Naive thymus-derived CD8-positive, alpha-beta T cell (primary cell): ENCODE measurements at regions of chr12 and their contacts with region 1.

Region 1: GRCh38 chr12:75511116-75512048 is at the start of gene KRR1:
- DNase-seq: peak; percentile 63 to 95 (median 87)
- ATAC-seq: peak; percentile 96 to 98
- H3K4me3 Mint-ChIP-seq: peak within 1 kb of the TSS; percentile 98 to 100 (median 99)
- H3K27ac Mint-ChIP-seq: peak within 1 kb of the TSS; percentile 98 to 100 (median 99)
- H3K4me1 Mint-ChIP-seq: peaks cover 17 to 38% (median 30%) of the 10 kb centered on the region in 4 donors
- H3K27me3 Mint-ChIP-seq: no peaks in the 10 kb centered on the region
- polyA plus RNA-seq, gene KRR1: 64.8 to 71.0 (median 66.7) TPM

Region 2: DNA sequence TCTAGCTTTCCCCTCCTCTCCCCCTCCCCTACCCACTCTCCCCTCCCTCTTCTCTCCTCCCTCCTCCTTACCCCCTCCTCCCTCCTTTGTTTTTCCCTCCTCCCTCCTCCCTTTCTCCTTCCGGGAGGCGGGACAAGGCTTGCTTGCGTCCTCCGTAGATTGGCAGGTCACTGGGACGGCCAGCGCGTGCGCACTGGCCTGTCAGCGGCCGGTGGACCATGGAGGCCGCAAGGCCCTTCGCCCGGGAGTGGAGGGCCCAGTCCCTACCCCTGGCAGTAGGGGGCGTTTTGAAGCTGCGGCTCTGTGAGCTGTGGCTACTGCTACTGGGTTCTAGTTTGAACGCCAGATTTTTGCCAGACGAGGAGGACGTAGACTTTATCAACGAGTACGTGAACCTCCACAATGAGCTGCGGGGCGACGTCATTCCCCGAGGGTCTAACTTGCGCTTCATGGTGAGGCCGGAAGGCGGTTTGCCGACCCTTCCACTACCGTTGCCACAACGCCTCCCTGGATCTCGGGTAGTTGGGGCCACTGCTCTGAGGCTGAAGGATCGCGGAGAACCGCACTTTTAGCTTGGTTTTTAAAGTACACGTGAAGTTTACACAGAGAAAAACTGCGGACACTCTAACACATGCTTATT is 120.4 kb before region 1 on chr12 and contains the start of gene GLIPR1L2:
- POLR2A ChIA-PET with region 1: interaction called, 11 read pairs
- DNase-seq: peak; percentile 67 to 92 (median 83)
- ATAC-seq: peak; percentile 89 to 92
- H3K4me3 Mint-ChIP-seq: peak within 1 kb of the TSS; percentile 90 to 97 (median 94)
- H3K27ac Mint-ChIP-seq: peak within 1 kb of the TSS; percentile 97 to 100 (median 98)
- H3K4me1 Mint-ChIP-seq: peaks cover 14 to 57% (median 38%) of the 10 kb centered on the region in 4 donors
- H3K27me3 Mint-ChIP-seq: no peaks in the 10 kb centered on the region
- polyA plus RNA-seq, gene GLIPR1L2: 1.1 to 3.2 (median 1.4) TPM

Region 3: GRCh38 chr12:75480469-75480949 is 30.9 kb before region 1 on chr12 and contains the start of gene GLIPR1:
- POLR2A ChIA-PET with region 1: interaction called, 24 read pairs
- DNase-seq: peak; percentile 22 to 82 (median 72)
- ATAC-seq: peak; percentile 71 to 74
- H3K4me3 Mint-ChIP-seq: peak within 1 kb of the TSS; percentile 74 to 100 (median 98)
- H3K27ac Mint-ChIP-seq: peak within 1 kb of the TSS; percentile 94 to 99 (median 99)
- H3K4me1 Mint-ChIP-seq: peaks cover 42 to 87% (median 74%) of the 10 kb centered on the region in 4 donors
- H3K27me3 Mint-ChIP-seq: peaks cover 0 to 1% (median 0%) of the 10 kb centered on the region in 5 donors
- polyA plus RNA-seq, gene GLIPR1: 51.2 to 117 (median 58.6) TPM

Region 4: DNA sequence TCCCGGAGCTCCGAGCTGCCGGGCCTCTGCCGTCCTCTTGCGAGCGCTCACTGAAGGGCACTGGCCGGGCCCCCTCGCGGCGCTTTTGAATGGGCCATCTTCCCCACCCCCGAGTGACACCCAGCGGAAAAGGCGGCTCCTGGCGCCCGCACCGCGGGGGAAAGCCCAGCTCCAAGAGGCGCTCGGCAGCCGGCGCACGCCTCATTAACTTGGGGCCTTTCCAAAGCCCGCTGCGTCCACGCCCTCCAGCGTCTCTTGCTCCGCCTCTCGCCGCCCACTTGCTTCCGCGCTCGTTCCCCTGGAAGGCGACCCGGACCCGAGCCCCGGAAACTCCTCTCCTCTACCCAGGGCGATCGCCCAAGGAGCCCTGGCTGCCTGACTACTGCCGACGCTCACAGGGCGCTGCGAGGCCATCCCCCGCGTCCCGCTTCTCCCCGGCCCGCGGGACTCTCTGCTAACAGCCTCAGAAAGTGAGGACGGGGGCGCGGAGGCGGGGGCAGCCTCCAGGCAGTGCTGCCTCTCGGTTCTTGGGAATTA is 520.2 kb after region 1 on chr12 and contains the start of gene PHLDA1:
- POLR2A ChIA-PET with region 1: interaction called, 14 read pairs
- DNase-seq: peak; percentile 72 to 90 (median 78)
- ATAC-seq: peak; percentile 80 to 85
- H3K4me3 Mint-ChIP-seq: peak within 1 kb of the TSS; percentile 82 to 97 (median 91)
- H3K27ac Mint-ChIP-seq: peak within 1 kb of the TSS; percentile 82 to 95 (median 90)
- H3K4me1 Mint-ChIP-seq: peaks cover 20 to 30% (median 25%) of the 10 kb centered on the region in 4 donors
- H3K27me3 Mint-ChIP-seq: peaks cover 0 to 8% (median 0%) of the 10 kb centered on the region in 5 donors
- polyA plus RNA-seq, gene PHLDA1: 0.04 to 0.13 (median 0.12) TPM